Cardiac septum (tissue), 1 donor: ENCODE measurements at regions of chr1 and their contacts with region 1.

Region 1: DNA sequence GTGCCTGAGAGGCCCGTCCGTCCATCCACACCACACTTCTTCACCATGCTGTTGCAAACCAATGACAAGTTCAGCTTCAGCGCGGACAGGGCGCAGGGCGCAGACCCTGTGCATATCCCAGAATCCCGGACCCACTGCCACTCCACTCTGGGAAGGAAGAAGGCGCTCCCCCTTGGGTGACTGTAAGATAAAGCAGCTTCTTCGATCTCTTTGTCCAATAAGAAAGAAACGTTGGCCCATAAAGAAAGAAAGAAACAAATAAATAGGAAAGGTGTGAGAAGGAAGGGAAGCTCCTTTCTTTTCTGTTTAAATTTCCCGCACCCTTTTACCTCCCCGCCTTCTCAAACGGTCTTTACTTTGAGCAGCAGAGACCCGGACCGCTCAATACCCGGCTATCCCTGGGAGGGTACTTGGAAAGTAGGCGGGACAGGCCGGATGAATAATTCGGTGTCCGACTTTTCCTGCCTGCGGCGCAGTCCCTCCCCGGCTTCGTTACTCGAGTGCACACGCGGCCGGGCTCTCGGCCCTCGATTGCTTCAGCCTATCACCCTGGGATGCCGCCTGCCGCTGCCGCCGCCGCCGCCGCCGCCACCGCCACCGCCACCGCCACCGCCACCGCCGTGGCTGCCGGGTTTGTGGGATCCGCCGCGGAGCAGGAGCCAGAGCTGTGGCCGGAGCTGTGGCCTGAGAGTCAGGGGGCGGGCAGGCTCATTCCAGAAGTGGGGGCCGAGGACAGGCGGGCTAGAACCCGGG is 523 bp upstream of the RASAL2 start:
- DNase-seq: peak; percentile 94

Region 2: DNA sequence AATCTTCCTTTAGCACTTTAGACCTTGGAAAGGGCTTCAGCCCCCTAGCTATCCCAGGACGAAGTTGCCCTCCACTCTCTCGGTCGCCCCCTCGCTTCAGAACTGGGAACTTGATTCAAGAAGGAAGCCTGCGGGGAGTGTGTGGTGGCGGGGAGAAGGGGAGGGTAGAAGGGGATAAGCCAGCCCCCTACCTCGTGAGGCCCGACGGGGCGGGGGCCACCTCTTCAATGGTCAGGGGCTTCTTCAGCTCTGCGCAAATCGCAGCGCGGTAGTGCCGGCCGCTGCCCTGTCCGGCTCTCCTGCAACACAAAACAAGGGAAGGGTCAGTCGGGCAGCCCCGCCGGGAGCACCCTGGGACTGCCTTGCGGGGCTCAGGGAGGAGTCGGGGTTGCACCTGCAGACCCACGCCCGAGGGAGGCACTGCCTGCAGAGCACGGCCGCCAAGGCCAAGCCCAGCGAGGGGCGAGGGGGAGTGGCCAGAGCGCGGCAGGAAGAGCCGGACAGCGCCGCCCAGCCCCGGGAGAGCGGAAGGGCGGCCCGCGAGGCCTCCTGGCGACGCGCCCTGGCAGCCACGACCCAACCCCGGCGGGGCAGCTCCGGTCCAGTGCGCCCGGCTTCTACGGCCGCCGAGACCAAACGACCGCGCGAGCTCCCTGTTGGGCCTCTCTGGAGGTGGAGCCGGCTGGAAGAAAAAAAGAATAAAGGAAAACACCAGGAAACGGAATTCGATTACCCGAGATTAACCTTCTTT is 55.7 kb before region 1 on chr1:
- intact Hi-C with region 1: loop called (anchors 5 kb)
- DNase-seq: peak; percentile 94

Region 3: GRCh38 chr1:178134061-178134460 is 40.7 kb after region 1 on chr1:
- intact Hi-C with region 1: loop called (anchors 5 kb)
- DNase-seq: no peak

Region 4: GRCh38 chr1:178172954-178173353 is 79.6 kb after region 1 on chr1:
- intact Hi-C with region 1: loop called (anchors 5 kb)
- DNase-seq: no peak

Region 5: DNA sequence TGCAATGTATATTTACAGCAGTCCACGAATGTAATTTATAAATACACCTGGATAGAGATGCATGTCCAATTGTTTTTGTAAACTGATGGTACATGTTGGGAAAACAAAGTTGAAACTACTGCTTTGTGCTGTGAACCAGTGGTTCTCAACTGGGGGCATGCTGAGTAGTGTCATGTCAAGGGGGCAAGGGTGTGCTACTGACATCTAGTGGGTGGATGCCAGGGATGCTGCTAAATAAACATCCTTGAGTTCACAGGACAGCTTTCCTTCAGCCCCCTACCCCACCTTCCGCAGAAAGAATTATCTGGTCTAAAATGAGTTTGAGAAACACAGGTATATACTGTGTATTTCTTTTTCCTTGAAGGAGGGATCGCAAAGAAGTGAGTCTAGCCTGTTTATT is 96.4 kb after region 1 on chr1:
- intact Hi-C with region 1: loop called (anchors 5 kb)
- DNase-seq: no peak